CD14-positive monocyte (primary cell): ENCODE measurements at regions of chr4 and their contacts with region 1.

Region 1: DNA sequence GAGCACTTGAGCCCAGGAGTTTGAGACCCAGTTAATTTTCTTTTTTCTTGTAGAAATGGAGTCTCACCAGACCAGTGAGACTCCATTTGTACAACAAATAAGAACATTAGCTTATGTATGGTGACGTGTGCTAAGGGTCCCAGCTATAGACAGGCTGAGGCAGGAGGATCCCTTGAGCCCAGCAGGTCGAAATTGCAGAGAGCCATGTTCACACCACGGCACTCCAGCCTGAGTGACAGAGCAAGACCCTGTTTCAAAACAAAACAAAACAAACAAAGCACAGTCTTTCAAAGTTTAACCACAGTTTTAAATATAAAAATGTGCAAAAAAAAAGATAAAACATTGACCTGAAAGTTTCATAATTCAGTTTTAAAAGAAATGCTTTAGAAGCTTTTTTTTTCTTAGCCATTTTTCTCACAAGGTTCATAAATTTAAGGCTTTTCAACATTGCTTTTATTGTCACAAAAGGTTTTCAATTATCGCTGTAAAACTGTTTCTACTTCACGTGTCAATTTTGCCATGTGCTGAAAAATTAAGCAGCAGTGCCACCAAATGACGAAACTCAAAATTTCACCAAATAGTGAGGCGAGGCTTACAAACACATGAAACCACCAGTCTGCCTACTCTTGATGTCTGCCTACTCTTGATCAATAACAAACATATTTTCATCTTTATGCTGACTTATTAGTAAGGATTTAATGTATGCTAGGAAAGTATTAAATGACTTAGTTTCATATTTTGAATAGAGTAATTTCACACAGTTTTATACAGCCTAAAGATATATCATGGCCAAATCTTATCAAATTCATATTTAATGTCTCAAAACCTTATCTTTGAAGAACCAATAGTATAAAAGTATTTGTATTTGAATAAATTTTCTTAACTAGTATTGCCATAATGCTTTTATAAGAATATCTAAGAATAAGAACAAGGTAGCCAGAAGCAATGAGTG is 126.3 kb downstream of the NEK1 start:
- DNase-seq: peak; percentile 12 to 30 (median 25)
- H3K4me3 ChIP-seq: no peak overlapping the region
- H3K4me3 Mint-ChIP-seq: no peak overlapping the region
- H3K27ac ChIP-seq: no peak overlapping the region
- H3K27ac Mint-ChIP-seq: no peak overlapping the region
- H3K4me1 ChIP-seq: no peaks in the 10 kb centered on the region
- H3K4me1 Mint-ChIP-seq: peaks cover 1% of the 10 kb centered on the region
- H3K27me3 ChIP-seq: no peaks in the 10 kb centered on the region
- H3K27me3 Mint-ChIP-seq: no peaks in the 10 kb centered on the region
- CTCF ChIP-seq: peak; percentile 62

Region 2: GRCh38 chr4:169033660-169034059 is 452.4 kb before region 1 on chr4:
- intact Hi-C with region 1: loop called in 1 of 2 experiments (anchors 10 kb)
- DNase-seq: no peak
- H3K4me3 ChIP-seq: no peak overlapping the region
- H3K4me3 Mint-ChIP-seq: no peak overlapping the region
- H3K27ac ChIP-seq: no peak overlapping the region
- H3K27ac Mint-ChIP-seq: no peak overlapping the region
- H3K4me1 ChIP-seq: no peaks in the 10 kb centered on the region
- H3K4me1 Mint-ChIP-seq: no peaks in the 10 kb centered on the region
- H3K27me3 ChIP-seq: no peaks in the 10 kb centered on the region
- H3K27me3 Mint-ChIP-seq: peaks cover 0 to 7% (median 0%) of the 10 kb centered on the region in 3 donors
- CTCF ChIP-seq: no peak